ENCODE measurements at regions of chr17 and their contacts with region 1.

Region 1: DNA sequence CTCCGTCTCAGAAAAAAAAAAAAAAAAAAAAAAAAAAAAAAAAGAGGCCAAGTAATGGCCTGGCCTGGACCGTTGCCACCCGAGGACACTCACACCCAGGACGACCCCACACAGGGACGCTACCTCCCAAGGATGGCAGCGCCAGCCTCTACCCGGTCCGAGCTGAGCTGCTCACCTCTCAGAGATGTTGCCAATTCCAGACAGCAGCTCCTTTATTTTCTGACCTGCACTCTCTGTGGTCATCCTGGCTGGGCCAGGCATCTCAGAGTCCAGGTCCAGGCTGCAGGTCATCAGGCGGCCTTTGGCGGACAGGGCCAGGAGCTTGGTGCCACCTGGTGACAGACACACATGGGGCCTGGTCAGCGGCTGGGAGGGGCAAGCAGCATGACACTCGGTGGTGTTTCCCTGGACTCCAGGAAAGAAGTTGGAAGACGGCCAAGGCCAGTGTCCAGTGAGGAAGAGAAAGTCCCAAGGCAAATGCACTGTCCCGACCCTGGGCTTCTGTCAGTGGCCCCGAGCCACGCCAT is 3.1 kb downstream of the FAAP100 start:
- DNase-seq: no peak
- H3K4me3 ChIP-seq: no peak overlapping the region
- H3K27ac ChIP-seq: no peak overlapping the region
- H3K4me1 ChIP-seq: peaks cover 14 to 20% of the 10 kb centered on the region in 2 donors
- H3K27me3 ChIP-seq: no peaks in the 10 kb centered on the region
- CTCF ChIP-seq: no peak
- POLR2A ChIP-seq: no peak

Region 2: GRCh38 chr17:81601525-81602120 is 52.5 kb after region 1 on chr17:
- intact Hi-C with region 1: loop called (anchors 10 kb)
- DNase-seq: peak; percentile 36 to 37
- H3K4me3 ChIP-seq: no peak overlapping the region
- H3K27ac ChIP-seq: no peak overlapping the region
- H3K4me1 ChIP-seq: no peaks in the 10 kb centered on the region
- H3K27me3 ChIP-seq: no peaks in the 10 kb centered on the region
- CTCF ChIP-seq: peak; percentile 48 to 86 (median 72)
- POLR2A ChIP-seq: no peak

Measured in thyroid gland (tissue), 4 donors.